Aorta (tissue), 5 donors: ENCODE measurements at regions of chr6 and their contacts with region 1.

Region 1: DNA sequence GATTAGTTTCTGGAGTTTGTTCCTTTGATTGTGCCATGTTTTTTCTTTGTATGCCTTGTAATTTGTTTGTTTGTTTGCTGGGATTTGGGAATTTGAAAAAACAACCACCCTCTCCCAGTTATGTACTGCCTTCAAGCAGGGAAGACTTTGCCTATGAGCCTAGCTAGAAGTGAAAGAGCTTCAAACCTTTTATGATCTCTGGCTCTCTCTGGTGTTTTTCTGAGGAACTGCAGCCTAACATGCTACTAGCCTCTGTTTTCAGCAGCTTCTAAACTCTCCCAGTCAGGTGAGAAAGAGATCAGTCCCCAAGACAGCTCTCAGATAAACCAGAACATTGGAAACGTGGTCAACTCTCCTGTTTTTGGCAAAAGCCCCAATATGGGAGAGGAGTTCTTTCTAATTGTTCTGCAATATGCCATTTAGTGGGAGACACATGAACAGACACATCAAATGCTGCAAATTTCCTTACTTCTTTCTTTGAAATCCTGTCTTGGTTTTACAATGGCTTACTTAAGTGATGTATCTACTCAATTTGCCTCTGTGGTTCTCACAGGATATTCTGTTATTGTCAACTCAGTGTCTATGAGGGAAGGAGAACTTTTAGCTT is 58.9 kb upstream of the SERINC1 start:
- DNase-seq: no peak
- ATAC-seq: peak; percentile 89
- H3K4me3 ChIP-seq: no peak overlapping the region
- H3K27ac ChIP-seq: no peak overlapping the region
- H3K4me1 ChIP-seq: no peaks in the 10 kb centered on the region
- H3K27me3 ChIP-seq: peaks cover 0 to 1% of the 10 kb centered on the region in 2 donors

Region 2: DNA sequence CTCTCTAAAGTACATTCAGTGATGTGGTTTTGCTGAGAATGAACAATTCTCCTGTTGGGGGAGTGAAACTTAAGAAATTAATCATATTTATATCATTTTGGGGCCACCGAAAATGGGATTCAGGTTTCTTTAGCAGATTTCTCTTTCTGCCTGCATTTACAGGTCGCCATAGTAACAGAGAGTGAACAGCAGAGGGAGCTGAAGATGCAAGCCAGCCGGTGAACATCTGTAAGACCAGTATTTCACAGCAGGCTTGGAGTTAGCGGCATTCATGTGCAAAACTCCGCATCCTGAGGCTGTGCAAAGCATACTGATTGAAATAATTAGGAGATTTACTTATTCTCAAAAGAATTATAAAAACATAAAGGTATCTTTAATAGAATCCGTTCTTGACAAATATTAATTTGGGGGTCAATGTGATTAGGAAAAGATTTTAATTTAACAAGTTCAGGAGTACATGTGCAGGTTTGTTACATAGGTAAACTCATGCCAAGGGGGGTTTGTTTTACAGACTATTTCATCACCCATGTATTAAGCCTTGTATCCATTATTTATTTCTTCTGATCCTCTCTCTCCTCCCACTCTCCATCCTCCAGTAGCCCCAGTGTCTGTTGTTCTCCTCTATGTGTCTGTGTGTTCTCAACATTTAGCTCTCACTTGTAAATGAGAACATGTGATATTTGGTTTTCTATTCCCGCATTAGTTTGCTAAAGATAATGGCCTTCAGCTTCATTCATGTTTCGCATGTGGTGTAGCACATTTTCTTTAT is 148.9 kb before region 1 on chr6:
- intact Hi-C with region 1: loop called (anchors 5 kb)
- DNase-seq: peak in 1 of 2 donors; percentile 55
- ATAC-seq: peak; percentile 76
- H3K4me3 ChIP-seq: no peak overlapping the region
- H3K27ac ChIP-seq: no peak overlapping the region
- H3K4me1 ChIP-seq: no peaks in the 10 kb centered on the region
- H3K27me3 ChIP-seq: no peaks in the 10 kb centered on the region

Region 3: GRCh38 chr6:122471107-122472021 is 59.2 kb before region 1 on chr6 and contains the start of gene SERINC1:
- intact Hi-C with region 1: loop called in 1 of 2 experiments (anchors 10 kb)
- DNase-seq: peak; percentile 97 to 98
- ATAC-seq: peak; percentile 99
- H3K4me3 ChIP-seq: peak within 1 kb of the TSS; percentile 91
- H3K27ac ChIP-seq: peak within 1 kb of the TSS; percentile 81 to 95
- H3K4me1 ChIP-seq: no peaks in the 10 kb centered on the region
- H3K27me3 ChIP-seq: no peaks in the 10 kb centered on the region
- total RNA-seq, gene SERINC1: 264 to 274 TPM

Region 4: DNA sequence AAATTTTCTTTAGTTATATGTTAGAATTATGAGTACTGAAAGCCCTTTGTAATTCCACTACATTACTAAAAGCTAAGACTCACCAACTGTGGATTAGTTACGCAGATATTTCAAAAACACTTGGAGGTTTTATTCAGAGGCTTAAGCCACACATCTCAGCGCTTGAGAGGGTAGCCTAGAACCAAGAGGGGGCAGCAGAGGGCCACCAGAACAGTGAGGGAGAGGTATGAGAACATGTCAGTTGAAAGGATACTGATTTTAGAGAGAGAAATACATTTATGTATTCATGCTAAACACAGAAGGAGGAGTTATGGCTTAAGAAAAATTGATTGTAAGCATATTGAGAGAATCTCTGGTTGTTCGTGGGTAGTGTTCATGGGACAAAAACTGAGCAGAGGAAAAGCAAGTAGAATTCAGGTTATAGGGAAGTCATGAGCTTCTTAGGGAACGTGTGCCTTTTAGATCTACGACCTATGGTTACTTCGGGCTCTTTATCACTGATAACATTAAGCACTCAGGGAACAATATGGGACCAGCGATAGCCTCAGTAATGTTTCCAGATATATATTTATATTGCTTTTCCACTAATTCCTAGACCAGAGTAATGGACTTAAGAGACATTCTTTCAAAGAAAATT is 38.5 kb before region 1 on chr6:
- intact Hi-C with region 1: loop called (anchors 2 to 5 kb)
- DNase-seq: peak; percentile 78 to 83
- ATAC-seq: peak; percentile 87
- H3K4me3 ChIP-seq: no peak overlapping the region
- H3K27ac ChIP-seq: no peak overlapping the region
- H3K4me1 ChIP-seq: no peaks in the 10 kb centered on the region
- H3K27me3 ChIP-seq: no peaks in the 10 kb centered on the region

Region 5: GRCh38 chr6:122620879-122621278 is 90.3 kb after region 1 on chr6:
- intact Hi-C with region 1: no loop called
- DNase-seq: no peak
- ATAC-seq: no peak
- H3K4me3 ChIP-seq: no peak overlapping the region
- H3K27ac ChIP-seq: no peak overlapping the region
- H3K4me1 ChIP-seq: no peaks in the 10 kb centered on the region
- H3K27me3 ChIP-seq: no peaks in the 10 kb centered on the region